Calu3 (cell line): ENCODE measurements at regions of chr4 and their contacts with region 1.

Region 1: GRCh38 chr4:186037692-186038658 is 31.0 kb upstream of the TLR3 start:
- DNase-seq: peak; percentile 39
- H3K4me3 Mint-ChIP-seq: no peak overlapping the region
- H3K27ac Mint-ChIP-seq: no peak overlapping the region
- H3K4me1 Mint-ChIP-seq: no peaks in the 10 kb centered on the region
- H3K27me3 Mint-ChIP-seq: no peaks in the 10 kb centered on the region
- CTCF ChIP-seq: peak; percentile 48

Region 2: DNA sequence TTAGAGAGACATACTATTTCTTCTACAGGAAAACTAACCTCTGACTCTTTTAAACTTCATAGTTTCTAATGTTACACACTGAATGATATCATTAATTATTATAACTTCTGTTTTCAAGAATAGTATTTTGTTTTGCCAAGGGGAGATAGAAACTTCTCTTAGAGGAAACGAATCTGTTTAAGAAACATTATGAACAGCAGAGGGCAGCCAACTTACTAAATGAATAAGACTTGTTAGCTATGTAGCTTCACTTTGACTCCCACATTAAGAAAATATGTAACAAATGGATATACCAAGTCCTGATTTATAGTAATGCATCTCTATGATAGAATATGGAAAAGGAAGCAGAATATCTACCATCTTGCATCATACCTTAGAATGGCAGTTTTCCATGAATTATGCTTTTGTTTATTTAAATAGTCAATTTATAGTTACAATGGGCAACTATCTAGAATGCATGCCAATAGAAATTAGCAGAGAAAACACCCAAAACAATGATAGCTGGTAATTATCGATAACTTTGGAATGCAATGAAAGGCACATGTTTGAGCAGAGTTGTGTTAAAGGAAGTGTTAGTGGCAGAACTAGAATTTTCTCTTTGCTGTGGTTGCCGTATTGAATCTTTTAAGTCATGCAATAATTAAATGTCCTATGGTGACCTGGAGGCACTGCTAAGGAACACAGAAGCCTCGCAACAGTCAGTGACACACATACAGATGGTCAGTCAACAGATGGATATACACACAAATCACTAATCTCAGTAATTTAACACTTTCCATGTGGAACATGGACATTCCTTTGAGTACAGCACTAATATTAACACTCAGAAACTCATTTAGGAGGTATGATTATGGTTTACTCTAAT is 396.9 kb before region 1 on chr4:
- CTCF ChIA-PET with region 1: interaction called, 23 read pairs
- intact Hi-C with region 1: loop called (anchors 1 kb)
- DNase-seq: no peak
- H3K4me3 Mint-ChIP-seq: no peak overlapping the region
- H3K27ac Mint-ChIP-seq: no peak overlapping the region
- H3K4me1 Mint-ChIP-seq: no peaks in the 10 kb centered on the region
- H3K27me3 Mint-ChIP-seq: no peaks in the 10 kb centered on the region
- CTCF ChIP-seq: no peak

Region 3: GRCh38 chr4:185896823-185897488 is 141.0 kb before region 1 on chr4:
- CTCF ChIA-PET with region 1: interaction called, 3 read pairs
- intact Hi-C with region 1: loop called (anchors 5 kb)
- DNase-seq: peak; percentile 76
- H3K4me3 Mint-ChIP-seq: peak overlapping the region; percentile 72
- H3K27ac Mint-ChIP-seq: peak overlapping the region; percentile 96
- H3K4me1 Mint-ChIP-seq: peaks cover 37% of the 10 kb centered on the region
- H3K27me3 Mint-ChIP-seq: no peaks in the 10 kb centered on the region
- CTCF ChIP-seq: no peak